WTC11 (cell line): ENCODE measurements at regions of chr4 and their contacts with region 1.

Region 1: DNA sequence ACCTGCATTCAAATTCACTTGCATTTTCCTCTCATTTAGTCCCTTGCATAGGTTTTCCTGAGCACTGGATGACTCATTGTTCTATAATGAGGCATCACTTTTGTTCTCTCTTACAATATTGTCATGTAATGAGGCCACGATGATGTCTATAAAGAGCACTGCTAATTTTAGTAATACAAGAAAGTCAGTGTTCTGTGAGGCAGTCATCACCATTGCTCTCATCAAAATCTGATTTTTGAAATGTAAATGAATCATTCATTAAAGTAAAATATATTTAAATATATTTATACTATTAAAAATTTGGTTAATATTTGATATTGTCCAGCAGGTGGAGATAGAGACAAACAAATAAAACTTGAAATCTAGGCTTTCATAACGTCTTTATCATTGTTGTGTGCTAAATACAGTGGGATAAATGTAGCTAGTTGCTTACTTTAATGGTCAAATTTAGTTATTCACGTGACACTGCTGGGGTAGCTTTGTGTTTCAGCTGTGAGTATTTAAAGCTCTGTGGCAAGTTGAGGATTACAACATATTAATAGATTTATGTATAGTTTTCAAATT is 15.4 kb downstream of the HMGB2 start:
- DNase-seq: no peak
- ATAC-seq: no peak
- H3K4me3 Mint-ChIP-seq: no peak overlapping the region
- H3K27ac Mint-ChIP-seq: no peak overlapping the region
- H3K4me1 Mint-ChIP-seq: peaks cover 17% of the 10 kb centered on the region
- H3K27me3 Mint-ChIP-seq: no peaks in the 10 kb centered on the region
- CTCF ChIP-seq: no peak

Region 2: DNA sequence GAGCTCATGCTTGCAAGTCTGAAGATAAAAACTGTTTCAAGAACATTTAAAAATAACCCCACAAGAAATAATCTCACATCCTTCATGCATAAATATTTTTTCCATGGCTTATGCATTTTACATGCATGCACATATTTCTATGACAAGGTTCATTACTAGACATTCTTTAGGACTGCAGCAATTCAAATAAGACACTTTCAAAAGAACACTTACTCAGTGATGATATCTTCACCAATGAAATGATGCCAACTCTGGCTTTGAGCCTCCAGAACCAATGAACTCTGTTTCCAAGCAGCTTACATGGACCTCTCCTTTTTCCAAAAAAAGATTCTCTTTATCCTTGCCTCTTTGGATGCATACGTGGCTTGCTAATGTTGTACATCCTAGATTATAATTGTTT is 1879.3 kb after region 1 on chr4:
- CTCF ChIA-PET with region 1: no interaction called
- POLR2A ChIA-PET with region 1: interaction called, 10 read pairs
- DNase-seq: no peak
- ATAC-seq: no peak
- H3K4me3 Mint-ChIP-seq: no peak overlapping the region
- H3K27ac Mint-ChIP-seq: no peak overlapping the region
- H3K4me1 Mint-ChIP-seq: 0 out of 2 replicates have a peak, but pooled peaks cover 2% of the 10 kb centered on the region
- H3K27me3 Mint-ChIP-seq: no peaks in the 10 kb centered on the region
- CTCF ChIP-seq: no peak